ENCODE measurements at regions of chr14 and their contacts with region 1.

Region 1: GRCh38 chr14:64338616-64339316 is 44.6 kb upstream of the ESR2 start:
- DNase-seq: peak; percentile 99
- ATAC-seq: peak; percentile 94
- H3K4me3 ChIP-seq: peak overlapping the region; percentile 83
- H3K27ac ChIP-seq: peak overlapping the region; percentile 94 to 95
- H3K4me1 ChIP-seq: peaks cover 17% of the 10 kb centered on the region
- CTCF ChIP-seq: no peak
- EP300 ChIP-seq: no peak
- POLR2A ChIP-seq: peak; percentile 96
- RAD21 ChIP-seq: no peak

Region 2: DNA sequence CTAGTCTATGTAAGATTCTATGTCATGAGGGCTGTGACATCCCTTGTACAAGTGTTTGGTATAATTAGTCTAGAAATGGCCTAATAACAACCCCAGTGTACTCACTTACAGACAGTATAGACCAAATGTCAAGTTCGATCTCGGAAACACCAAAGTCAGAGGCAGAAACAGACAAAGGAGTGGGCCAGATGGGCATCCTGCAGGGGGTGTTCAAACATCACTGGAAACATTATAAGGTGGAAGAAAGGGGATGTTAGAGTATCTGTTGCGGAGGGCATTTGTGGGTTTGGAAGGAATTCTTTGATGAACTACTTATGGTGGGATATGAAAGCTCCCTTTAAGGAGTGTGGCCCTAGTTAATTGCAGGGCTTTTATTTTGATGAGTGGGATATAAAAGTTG is 179.2 kb before region 1 on chr14:
- CTCF ChIA-PET with region 1: no interaction called
- POLR2A ChIA-PET with region 1: no interaction called
- DNase-seq: no peak
- ATAC-seq: no peak
- H3K4me3 ChIP-seq: no peak overlapping the region
- H3K27ac ChIP-seq: no peak overlapping the region
- H3K4me1 ChIP-seq: no peaks in the 10 kb centered on the region
- CTCF ChIP-seq: no peak
- EP300 ChIP-seq: no peak
- POLR2A ChIP-seq: no peak
- RAD21 ChIP-seq: peak in 1 of 2 experiments; percentile 27; a peak in 1 of 5 replicates

Region 3: GRCh38 chr14:64363265-64363846 is 24.6 kb after region 1 on chr14:
- CTCF ChIA-PET with region 1: interaction called, 14 read pairs
- POLR2A ChIA-PET with region 1: interaction called, 5 read pairs
- DNase-seq: no peak
- ATAC-seq: no peak
- H3K4me3 ChIP-seq: no peak overlapping the region
- H3K27ac ChIP-seq: no peak overlapping the region
- H3K4me1 ChIP-seq: no peaks in the 10 kb centered on the region
- CTCF ChIP-seq: no peak
- EP300 ChIP-seq: no peak
- POLR2A ChIP-seq: no peak
- RAD21 ChIP-seq: no peak

Region 4: DNA sequence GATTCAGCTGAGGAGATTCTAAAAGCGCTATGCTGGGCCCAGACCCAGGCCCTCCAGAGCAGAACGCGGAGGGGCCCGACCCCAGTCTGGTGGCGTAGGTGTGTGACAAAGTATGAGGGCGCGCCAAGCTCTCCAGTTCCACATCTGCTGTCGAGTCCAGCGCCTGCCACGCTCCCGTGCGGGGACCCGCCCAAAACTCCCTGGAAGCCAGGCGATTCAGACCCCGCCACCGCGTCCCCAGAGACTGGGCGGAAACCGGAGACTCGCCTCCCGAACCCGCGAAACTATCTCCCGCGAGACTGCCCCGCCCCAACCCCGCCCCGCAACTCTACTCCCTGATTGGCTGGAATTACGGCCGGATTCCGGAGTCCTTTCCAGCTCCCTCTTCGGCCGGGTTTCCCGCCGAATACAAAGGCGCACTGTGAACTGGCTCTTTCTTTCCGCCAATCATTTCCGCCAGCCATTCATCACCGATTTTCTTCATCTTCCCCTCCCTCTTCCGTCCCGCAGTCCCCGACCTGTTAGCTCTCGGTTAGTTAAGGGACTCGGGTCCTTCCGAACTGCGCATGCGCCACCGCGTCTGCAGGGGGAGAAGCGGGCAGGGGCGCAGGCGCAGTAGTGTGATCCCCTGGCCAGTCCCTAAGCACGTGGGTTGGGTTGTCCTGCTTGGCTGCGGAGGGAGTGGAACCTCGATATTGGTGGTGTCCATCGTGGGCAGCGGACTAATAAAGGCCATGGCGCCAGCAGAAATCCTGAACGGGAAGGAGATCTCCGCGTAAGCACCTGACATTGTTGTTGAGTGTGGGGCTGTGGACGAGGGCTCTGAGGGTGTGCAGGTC is 49.1 kb after region 1 on chr14 and contains the start of gene MTHFD1:
- CTCF ChIA-PET with region 1: interaction called, 3 read pairs
- POLR2A ChIA-PET with region 1: interaction called, 16 read pairs
- DNase-seq: peak; percentile 99
- ATAC-seq: peak; percentile 90 to 91
- H3K4me3 ChIP-seq: peak within 1 kb of the TSS; percentile 77
- H3K27ac ChIP-seq: peak within 1 kb of the TSS; percentile 86 to 95
- H3K4me1 ChIP-seq: peaks cover 8% of the 10 kb centered on the region; the same call in 2 of the 3 replicates
- CTCF ChIP-seq: no peak
- EP300 ChIP-seq: no peak
- POLR2A ChIP-seq: peak; percentile 78
- RAD21 ChIP-seq: no peak
- polyA plus RNA-seq, gene MTHFD1: 102 and 105 TPM in 2 replicates

Region 5: GRCh38 chr14:64421166-64421565 is 82.4 kb after region 1 on chr14:
- CTCF ChIA-PET with region 1: interaction called, 12 read pairs
- POLR2A ChIA-PET with region 1: no interaction called
- DNase-seq: peak in 1 of 2 experiments; percentile 4
- ATAC-seq: peak; percentile 50 to 66; a peak in 4 of 6 replicates
- H3K4me3 ChIP-seq: no peak overlapping the region
- H3K27ac ChIP-seq: peak overlapping the region in 1 of 2 experiments; percentile 40; a peak in 2 of 6 replicates
- H3K4me1 ChIP-seq: peaks cover 15% of the 10 kb centered on the region; the same call in 2 of the 3 replicates
- CTCF ChIP-seq: no peak
- EP300 ChIP-seq: no peak
- POLR2A ChIP-seq: no peak
- RAD21 ChIP-seq: no peak

Region 6: DNA sequence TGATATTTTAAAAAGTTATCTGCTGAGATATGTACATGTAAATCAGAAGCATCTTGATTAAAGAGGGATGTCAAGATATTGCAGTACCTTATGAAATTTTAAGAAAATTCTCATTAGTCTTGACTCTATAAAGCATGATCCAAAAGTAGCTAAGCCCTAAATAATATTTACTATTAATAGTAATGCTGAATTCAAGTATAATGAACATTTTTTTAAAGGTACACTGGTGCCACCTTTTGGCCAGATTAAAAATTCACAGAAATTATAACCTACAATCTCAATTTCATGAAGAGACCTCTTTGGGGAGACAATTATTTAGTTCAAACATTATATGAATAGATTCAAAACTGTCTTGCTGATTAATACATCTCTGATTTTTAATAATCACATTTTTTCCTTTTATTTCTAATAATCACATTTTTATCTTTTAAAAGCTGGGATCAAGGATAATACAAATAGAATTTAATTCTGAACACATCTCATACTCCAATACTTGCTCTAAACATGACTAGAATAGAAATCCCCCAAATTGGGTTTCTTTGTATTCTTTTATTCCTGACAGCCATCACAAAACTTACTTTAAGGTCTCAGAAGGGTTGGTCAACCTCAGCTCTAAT is 140.0 kb after region 1 on chr14:
- CTCF ChIA-PET with region 1: interaction called, 93 read pairs
- POLR2A ChIA-PET with region 1: interaction called, 4 read pairs
- DNase-seq: peak in 1 of 2 experiments; percentile 44
- ATAC-seq: peak in 1 of 2 experiments; percentile 43; a peak in 1 of 6 replicates
- H3K4me3 ChIP-seq: no peak overlapping the region
- H3K27ac ChIP-seq: no peak overlapping the region
- H3K4me1 ChIP-seq: no peaks in the 10 kb centered on the region
- CTCF ChIP-seq: peak; percentile 65
- EP300 ChIP-seq: no peak
- POLR2A ChIP-seq: no peak
- RAD21 ChIP-seq: peak; percentile 60 to 70

Region 7: GRCh38 chr14:64510825-64511671 is 172.3 kb after region 1 on chr14:
- CTCF ChIA-PET with region 1: interaction called, 12 read pairs
- POLR2A ChIA-PET with region 1: no interaction called
- DNase-seq: peak; percentile 32 to 76
- ATAC-seq: peak; percentile 81 to 83; a peak in 5 of 6 replicates
- H3K4me3 ChIP-seq: no peak overlapping the region
- H3K27ac ChIP-seq: peak overlapping the region; percentile 34 to 71
- H3K4me1 ChIP-seq: peaks cover 75% of the 10 kb centered on the region
- CTCF ChIP-seq: peak; percentile 96
- EP300 ChIP-seq: no peak
- POLR2A ChIP-seq: no peak
- RAD21 ChIP-seq: peak; percentile 53

Region 8: GRCh38 chr14:64673748-64674147 is 335.0 kb after region 1 on chr14:
- CTCF ChIA-PET with region 1: no interaction called
- POLR2A ChIA-PET with region 1: no interaction called
- DNase-seq: no peak
- ATAC-seq: no peak
- H3K4me3 ChIP-seq: no peak overlapping the region
- H3K27ac ChIP-seq: peak overlapping the region; percentile 21 to 79; a peak in 3 of 6 replicates
- H3K4me1 ChIP-seq: peaks cover 30% of the 10 kb centered on the region
- CTCF ChIP-seq: no peak
- EP300 ChIP-seq: no peak
- POLR2A ChIP-seq: no peak
- RAD21 ChIP-seq: no peak